Activated T-helper 1 cell treated with anti-CD3 and anti-CD28 coated beads, Interleukin-12 subunit alpha, Interleukin-12 subunit beta, Interleukin-2, Interleukin-4 antibody, amounts not matched to agents 30 ng/mL and 10 ng/mL and 1 ng/mL, durations not matched to agents 14 hours and 24 hours and 36 hours (primary cell): ENCODE measurements at regions of chr3 and their contacts with region 1.

Region 1: GRCh38 chr3:186826976-186827731 is 15.4 kb upstream of the ADIPOQ start:
- DNase-seq: peak; percentile 87
- H3K4me3 Mint-ChIP-seq: peak overlapping the region; percentile 93
- H3K27ac Mint-ChIP-seq: peak overlapping the region; percentile 78
- H3K4me1 Mint-ChIP-seq: peaks cover 20% of the 10 kb centered on the region
- H3K27me3 Mint-ChIP-seq: peaks cover 48% of the 10 kb centered on the region

Region 2: GRCh38 chr3:186806089-186807055 is 20.8 kb before region 1 on chr3 and contains the start of gene RFC4:
- intact Hi-C with region 1: loop called (anchors 1 kb)
- DNase-seq: peak; percentile 80
- H3K4me3 Mint-ChIP-seq: peak within 1 kb of the TSS; percentile 93
- H3K27ac Mint-ChIP-seq: peak within 1 kb of the TSS; percentile 85
- H3K4me1 Mint-ChIP-seq: peaks cover 31% of the 10 kb centered on the region
- H3K27me3 Mint-ChIP-seq: no peaks in the 10 kb centered on the region
- total RNA-seq, gene RFC4: 111 and 122 TPM in 2 replicates